ENCODE measurements at regions of chr1 and their contacts with region 1.

Region 1: DNA sequence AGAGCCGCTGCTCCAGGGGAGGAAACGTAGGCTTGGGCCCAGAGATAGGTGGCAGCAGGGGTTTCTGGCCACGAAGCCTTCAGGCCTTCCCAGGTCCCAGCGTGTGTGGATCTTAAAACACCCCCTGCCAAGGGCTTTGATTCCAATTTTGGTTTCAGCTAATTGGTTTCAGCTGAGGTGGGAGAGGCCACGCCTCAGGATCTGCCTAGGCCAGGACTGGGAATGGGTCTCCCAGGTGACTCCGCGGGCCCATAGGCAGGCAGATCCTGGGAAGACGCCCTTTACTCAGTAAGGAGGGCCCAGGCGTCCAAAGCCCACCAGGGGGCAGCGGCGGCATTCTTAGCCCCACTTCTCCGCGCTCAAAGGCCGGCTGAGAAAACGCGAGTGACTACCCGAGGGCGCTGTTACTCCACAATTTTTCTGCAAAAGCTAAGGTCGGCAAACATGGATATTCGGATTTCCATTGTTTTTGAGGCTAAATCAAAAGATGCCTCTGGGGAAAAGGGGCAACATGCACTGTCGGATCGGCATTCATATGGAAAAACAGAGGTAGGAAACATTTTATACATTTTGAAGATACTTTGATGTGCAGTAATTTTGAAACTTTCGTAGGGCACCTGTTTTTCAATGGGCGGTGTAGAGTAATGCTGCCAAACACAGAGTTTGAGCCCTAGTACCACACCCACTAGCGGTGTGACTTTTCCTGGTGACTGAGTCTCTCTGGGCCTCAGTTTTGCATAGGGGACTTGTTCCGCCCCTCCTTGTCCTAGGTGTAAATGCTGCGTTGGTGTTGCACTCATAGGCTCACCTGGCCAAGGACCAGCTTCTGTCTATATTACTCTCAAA is 31.8 kb upstream of the BCL10 start:
- DNase-seq: peak; percentile 80
- H3K4me3 Mint-ChIP-seq: no peak overlapping the region
- H3K27ac Mint-ChIP-seq: no peak overlapping the region
- H3K4me1 Mint-ChIP-seq: peaks cover 4% of the 10 kb centered on the region
- H3K27me3 Mint-ChIP-seq: peaks cover 26% of the 10 kb centered on the region

Region 2: DNA sequence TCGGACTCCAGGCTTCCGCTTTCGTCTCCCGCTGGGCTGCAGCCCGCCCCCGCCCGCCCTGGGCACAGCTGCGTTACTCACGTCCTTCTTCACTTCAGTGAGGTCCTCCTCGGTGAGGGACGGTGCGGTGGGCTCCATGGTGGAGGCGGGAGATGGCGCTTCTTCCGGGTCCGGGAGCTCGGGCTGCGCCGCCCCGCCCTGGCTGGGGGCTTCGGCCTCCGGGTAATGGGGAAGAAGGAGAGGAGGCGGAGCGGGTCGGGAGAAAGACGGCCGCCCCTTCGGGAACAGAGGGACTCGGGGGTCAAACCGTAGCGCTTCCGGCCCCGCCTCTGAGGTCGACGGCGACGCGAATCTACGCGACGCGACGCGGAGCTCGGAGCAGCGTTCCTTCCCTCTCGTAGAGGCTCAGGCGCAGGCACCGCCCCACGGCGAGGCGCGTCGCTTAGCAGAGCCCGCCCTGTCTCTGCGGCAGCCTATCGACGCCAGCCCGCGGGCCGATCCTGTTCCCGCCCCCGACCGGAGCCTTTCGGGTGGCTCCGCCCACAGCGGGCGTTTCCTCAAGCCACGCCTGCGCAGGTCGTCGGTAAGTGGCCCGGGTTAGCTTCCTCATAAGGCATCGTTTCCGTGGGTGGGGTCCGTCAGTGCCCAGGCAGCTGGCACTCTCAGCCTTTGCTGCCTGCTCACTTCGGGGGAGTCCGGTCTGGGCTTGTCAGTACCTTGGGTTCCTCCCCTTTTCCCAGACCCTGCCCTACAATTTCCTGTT is 31.8 kb before region 1 on chr1 and contains the start of gene BCL10:
- CTCF ChIA-PET with region 1: no interaction called
- intact Hi-C with region 1: no loop called
- DNase-seq: peak; percentile 97
- H3K4me3 Mint-ChIP-seq: peak within 1 kb of the TSS; percentile 80
- H3K27ac Mint-ChIP-seq: peak within 1 kb of the TSS; percentile 87
- H3K4me1 Mint-ChIP-seq: peaks cover 46% of the 10 kb centered on the region
- H3K27me3 Mint-ChIP-seq: no peaks in the 10 kb centered on the region
- total RNA-seq, gene BCL10: 13.8 to 17.7 TPM

Region 3: DNA sequence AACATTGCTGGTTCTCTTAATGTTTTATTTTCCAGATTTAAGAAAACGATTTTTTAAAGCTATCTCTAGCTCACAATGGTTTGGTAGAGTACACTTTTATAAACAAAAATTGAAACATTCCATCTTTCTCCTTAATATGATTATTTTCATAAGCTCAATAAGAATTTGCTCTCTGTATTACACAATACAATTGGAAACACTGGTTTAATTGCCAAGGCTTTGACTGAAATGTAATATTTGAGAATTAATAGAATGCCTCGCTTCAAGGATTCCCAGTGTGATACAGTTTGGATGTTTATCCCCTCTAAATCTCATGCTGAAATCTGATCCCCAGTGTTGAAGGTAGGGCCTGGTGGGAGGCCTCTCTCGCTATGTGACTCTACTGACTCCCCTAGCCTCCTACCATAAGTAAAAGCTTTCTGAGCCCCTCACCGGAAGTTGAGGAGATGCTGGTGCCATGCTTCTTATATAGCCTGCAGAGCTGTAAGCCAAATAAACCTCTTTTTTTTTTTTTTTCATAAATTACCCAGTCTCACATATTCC is 89.4 kb after region 1 on chr1:
- CTCF ChIA-PET with region 1: no interaction called
- intact Hi-C with region 1: no loop called
- DNase-seq: no peak
- H3K4me3 Mint-ChIP-seq: no peak overlapping the region
- H3K27ac Mint-ChIP-seq: no peak overlapping the region
- H3K4me1 Mint-ChIP-seq: no peaks in the 10 kb centered on the region
- H3K27me3 Mint-ChIP-seq: no peaks in the 10 kb centered on the region

Region 4: DNA sequence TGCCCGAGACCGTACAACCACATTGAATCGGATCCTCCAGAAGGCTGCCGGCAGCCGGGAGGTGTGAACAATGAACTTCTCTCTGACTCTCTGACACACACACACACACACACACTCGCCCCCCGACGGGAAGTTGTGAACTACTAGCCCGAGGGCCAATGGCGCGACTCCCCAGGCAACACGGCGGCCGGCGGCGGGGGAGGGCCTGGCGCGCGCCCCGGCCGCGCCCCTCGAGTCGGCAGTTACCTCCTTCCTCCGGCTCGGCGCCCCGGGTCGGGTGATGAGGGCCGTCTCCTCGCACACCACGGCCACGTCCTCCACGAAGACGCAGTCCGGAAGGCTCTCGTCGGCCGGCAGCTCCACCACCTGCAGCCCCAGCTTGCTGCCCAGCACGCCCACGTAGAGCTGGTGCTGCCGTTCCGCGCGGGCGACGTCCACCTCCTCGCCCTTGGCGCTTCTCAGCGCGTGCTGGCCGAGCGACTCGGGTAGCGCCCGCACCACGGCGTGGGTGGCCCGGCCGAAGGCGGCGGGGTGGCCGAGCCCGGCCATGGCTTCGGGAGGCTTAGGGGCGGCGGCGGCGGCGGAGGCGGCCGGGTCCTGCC is 156.4 kb after region 1 on chr1:
- CTCF ChIA-PET with region 1: no interaction called
- intact Hi-C with region 1: loop called (anchors 5 kb)
- DNase-seq: peak; percentile 54
- H3K4me3 Mint-ChIP-seq: peak overlapping the region; percentile 54
- H3K27ac Mint-ChIP-seq: no peak overlapping the region
- H3K4me1 Mint-ChIP-seq: peaks cover 6% of the 10 kb centered on the region
- H3K27me3 Mint-ChIP-seq: peaks cover 65% of the 10 kb centered on the region

Region 5: DNA sequence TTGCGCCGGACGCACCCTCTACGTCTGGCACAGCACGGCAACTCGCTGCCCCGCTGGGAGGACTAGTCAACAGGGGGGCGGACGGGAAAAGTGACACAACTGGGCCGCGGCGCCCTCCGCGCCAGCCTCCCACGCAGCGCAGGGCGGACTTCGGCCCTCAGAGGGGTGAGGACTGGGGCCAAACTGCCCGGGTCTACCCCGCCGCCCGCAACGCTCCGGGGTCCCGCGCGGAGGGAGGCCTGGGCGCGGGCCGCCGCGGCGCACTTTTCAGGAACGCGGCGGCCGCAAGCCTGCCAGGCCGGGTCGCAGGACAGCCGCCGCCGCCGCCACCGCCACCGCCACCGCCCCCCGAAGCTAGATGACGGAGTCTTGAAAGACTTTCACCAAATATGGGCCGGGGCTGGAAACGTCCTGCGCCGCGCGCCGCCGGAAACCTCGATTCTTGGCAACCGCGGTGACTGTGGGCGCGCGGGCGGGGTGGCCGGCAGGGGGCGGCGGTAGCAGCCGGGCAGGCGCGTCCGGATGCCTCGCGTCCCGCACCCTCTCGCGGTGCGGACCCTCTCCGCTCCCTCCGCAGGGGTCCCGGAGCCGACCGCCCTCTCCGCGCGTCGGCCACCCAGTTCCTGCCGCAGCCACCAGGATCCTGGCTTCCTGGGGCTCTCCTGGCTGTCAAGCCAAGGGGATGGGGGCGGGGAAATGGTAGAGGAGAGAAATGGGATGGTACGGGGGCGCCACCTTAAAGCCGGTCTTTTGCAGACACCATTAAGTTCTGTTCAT is 268.6 kb after region 1 on chr1:
- CTCF ChIA-PET with region 1: interaction called, 4 read pairs
- intact Hi-C with region 1: loop called (anchors 1 kb)
- DNase-seq: peak; percentile 74
- H3K4me3 Mint-ChIP-seq: peak overlapping the region; percentile 63
- H3K27ac Mint-ChIP-seq: no peak overlapping the region
- H3K4me1 Mint-ChIP-seq: peaks cover 25% of the 10 kb centered on the region
- H3K27me3 Mint-ChIP-seq: peaks cover 74% of the 10 kb centered on the region

Region 6: DNA sequence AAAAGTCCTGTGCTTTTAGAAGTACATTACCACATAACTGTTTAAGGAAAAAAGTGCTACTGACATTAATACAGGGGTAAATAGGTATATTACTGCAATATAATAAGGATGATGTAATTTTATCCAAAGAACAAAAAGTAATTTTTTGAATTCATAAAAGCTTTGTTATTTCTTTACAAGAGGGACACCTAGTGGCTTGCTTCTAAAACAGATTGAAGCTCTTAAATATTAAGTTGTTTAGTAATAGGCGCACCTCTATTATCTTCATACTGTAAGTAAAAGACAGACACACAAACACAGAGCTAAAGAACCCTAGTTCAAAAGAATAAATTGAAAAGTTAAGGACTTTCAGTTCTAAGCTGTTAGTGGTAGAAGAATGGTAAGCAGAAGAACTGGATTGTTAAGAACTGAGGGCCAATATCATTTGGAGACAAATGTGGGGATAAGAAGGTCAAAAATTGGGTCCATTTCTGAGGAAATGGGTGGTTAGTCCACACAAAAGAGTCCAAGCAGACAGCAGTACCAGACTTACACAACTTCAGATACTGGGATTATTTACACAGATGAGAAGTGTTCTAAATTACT is 384.6 kb after region 1 on chr1:
- CTCF ChIA-PET with region 1: interaction called, 5 read pairs
- intact Hi-C with region 1: loop called (anchors 1 kb)
- DNase-seq: no peak
- H3K4me3 Mint-ChIP-seq: no peak overlapping the region
- H3K27ac Mint-ChIP-seq: no peak overlapping the region
- H3K4me1 Mint-ChIP-seq: peaks cover 13% of the 10 kb centered on the region
- H3K27me3 Mint-ChIP-seq: no peaks in the 10 kb centered on the region

Region 7: GRCh38 chr1:85884372-85885035 is 576.3 kb after region 1 on chr1:
- CTCF ChIA-PET with region 1: no interaction called
- intact Hi-C with region 1: loop called (anchors 10 kb)
- DNase-seq: no peak
- H3K4me3 Mint-ChIP-seq: no peak overlapping the region
- H3K27ac Mint-ChIP-seq: no peak overlapping the region
- H3K4me1 Mint-ChIP-seq: no peaks in the 10 kb centered on the region
- H3K27me3 Mint-ChIP-seq: no peaks in the 10 kb centered on the region

Region 8: DNA sequence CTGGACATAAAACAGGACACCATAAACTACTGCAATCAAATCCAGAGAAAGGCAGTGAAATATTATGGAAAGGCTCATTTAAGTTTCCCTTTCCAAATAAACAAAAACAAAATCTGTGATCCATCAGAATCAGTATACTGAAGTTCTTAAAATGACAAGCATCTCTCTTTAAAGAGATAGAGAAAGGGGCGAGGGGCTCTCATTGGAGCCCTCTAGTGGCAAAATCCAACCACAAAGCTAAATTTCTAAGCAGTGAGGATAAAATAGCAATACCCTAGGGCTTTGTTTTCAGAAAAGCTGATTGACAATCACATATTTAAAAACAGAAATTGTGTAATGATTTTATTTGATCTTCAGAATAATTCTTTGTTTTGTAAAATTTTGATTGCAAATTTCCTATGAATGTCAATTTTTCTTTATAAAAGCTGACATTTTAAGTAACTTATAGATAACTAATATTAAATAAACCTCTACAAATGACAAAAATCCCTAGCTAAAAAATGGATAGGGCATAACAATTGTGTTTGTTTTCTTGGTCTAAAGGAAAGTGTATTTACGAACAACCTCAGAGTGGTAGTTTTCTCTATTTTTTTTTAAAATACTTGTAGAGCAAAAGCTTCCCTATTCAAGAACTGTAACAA is 710.2 kb after region 1 on chr1:
- CTCF ChIA-PET with region 1: interaction called, 3 read pairs
- intact Hi-C with region 1: loop called (anchors 1 kb)
- DNase-seq: peak; percentile 13
- H3K4me3 Mint-ChIP-seq: no peak overlapping the region
- H3K27ac Mint-ChIP-seq: no peak overlapping the region
- H3K4me1 Mint-ChIP-seq: no peaks in the 10 kb centered on the region
- H3K27me3 Mint-ChIP-seq: no peaks in the 10 kb centered on the region

Measured in activated naive CD4-positive, alpha-beta T cell treated with anti-CD3 and anti-CD28 coated beads for 36 hours (primary cell).